ENCODE measurements at regions of chr3 and their contacts with region 1.

Region 1: DNA sequence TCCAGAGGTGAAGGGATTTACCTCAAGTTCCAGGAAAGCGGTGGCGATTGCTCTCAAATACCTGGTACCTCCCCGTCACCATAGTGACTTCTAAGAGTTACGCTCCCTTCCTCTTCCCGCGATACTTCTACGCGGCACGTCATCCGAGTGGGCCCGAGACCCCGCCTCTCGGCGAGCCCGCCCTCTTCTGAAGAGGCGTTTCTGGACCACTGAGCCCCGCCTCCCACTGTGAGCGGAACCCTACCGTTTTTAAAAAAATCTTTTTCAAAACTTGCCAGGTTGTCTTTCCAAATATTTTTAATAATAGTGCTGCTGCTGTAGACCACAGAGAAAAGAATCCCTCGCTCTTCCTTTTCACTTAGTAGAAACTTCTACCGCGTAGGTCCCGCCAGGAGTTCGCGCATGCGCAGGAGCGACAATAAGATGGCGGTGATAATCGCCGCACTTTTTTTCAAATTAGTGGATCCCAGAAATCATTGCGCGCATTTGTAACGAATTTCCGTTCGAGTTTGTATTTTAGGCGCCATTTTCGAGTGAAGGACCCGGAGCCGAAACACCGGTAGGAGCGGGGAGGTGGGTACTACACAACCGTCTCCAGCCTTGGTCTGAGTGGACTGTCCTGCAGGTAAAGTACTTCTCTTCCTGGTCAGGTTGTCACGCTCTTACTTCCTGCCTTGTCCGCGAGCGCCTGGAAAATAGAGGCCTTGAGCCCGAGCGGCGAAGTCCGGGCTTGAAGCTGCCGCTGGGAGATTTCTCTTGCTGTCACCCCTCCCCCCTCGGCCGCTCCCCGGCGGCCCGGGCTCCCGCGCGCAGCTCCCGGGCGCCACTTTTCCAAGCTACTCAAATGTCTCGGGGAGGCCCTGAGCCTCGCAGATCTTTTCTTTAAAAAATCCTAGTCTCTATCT is at the starts of genes IFT80 and SMC4:
- DNase-seq: peak; percentile 91 to 94
- ATAC-seq: peak; percentile 98
- H3K4me3 ChIP-seq: peak within 1 kb of the TSS; percentile 51 to 88 (median 80)
- H3K27ac ChIP-seq: peak within 1 kb of the TSS; percentile 82 to 87 (median 86)
- H3K4me1 ChIP-seq: peaks cover 20 to 28% of the 10 kb centered on the region in 2 donors
- H3K27me3 ChIP-seq: no peaks in the 10 kb centered on the region
- CTCF ChIP-seq: no peak
- POLR2A ChIP-seq: peak; percentile 45 to 75
- total RNA-seq, gene IFT80: 3.9 to 7.9 (median 6.0) TPM
- total RNA-seq, gene SMC4: 7.2 to 24.3 (median 14.7) TPM

Region 2: GRCh38 chr3:158801696-158802408 is 1597.5 kb before region 1 on chr3 and contains the start of gene MFSD1:
- in situ Hi-C with region 1: no loop called
- intact Hi-C with region 1: loop called (anchors 5 kb)
- DNase-seq: peak; percentile 90 to 94
- ATAC-seq: peak; percentile 98
- H3K4me3 ChIP-seq: peak within 1 kb of the TSS; percentile 68 to 99 (median 92)
- H3K27ac ChIP-seq: peak within 1 kb of the TSS; percentile 80 to 95 (median 86)
- H3K4me1 ChIP-seq: peaks cover 16 to 30% of the 10 kb centered on the region in 2 donors
- H3K27me3 ChIP-seq: no peaks in the 10 kb centered on the region
- CTCF ChIP-seq: no peak
- POLR2A ChIP-seq: peak; percentile 76 to 80
- total RNA-seq, gene MFSD1: 18.6 to 33.5 (median 25.2) TPM

Region 3: DNA sequence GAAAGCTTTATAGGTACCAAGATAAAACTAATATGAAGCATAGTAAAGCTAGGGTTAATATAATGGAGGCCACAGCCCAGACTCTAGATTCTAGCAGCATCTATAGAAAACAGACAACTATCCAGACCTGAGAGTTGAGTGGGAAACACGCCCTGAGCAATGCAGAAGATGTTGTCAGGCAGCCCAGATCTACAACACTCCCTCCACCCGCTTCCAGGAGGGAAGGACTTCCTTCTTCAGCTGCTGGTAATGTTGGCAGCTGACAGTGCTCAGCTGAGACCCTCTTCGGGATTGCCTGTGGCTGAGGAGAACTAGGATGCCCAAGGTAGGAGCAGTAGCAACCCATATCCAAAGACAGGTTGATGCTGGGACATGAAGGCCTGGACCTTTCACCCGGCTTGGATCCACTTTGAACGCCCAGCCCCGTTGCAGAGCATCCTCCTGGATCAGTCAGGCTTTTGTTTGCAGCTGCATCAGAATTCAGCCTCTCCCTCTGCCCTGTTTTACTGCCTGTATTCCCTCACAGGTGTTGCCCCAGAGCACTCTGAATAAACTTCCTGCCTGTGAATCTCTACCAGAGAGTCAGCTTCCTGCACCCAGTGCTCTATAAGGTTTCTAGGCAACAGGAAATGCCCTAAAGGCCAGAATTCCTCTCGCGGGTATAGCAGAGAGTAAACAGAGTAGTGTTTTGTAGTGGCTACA is 585.4 kb before region 1 on chr3:
- in situ Hi-C with region 1: loop called in 1 of 4 experiments (anchors 10 kb)
- intact Hi-C with region 1: no loop called
- DNase-seq: no peak
- ATAC-seq: no peak
- H3K4me3 ChIP-seq: no peak overlapping the region
- H3K27ac ChIP-seq: no peak overlapping the region
- H3K4me1 ChIP-seq: peaks cover 4 to 8% of the 10 kb centered on the region in 2 donors
- H3K27me3 ChIP-seq: no peaks in the 10 kb centered on the region
- CTCF ChIP-seq: no peak
- POLR2A ChIP-seq: no peak

Region 4: GRCh38 chr3:159884661-159885402 is 514.5 kb before region 1 on chr3:
- in situ Hi-C with region 1: no loop called
- intact Hi-C with region 1: loop called (anchors 2 kb)
- DNase-seq: no peak
- ATAC-seq: no peak
- H3K4me3 ChIP-seq: no peak overlapping the region
- H3K27ac ChIP-seq: peak overlapping the region in 3 of 4 donors; percentile 39 to 92 (median 83)
- H3K4me1 ChIP-seq: peaks cover 60 to 68% of the 10 kb centered on the region in 2 donors
- H3K27me3 ChIP-seq: no peaks in the 10 kb centered on the region
- CTCF ChIP-seq: peak; percentile 24 to 57 (median 41)
- POLR2A ChIP-seq: no peak

Region 5: DNA sequence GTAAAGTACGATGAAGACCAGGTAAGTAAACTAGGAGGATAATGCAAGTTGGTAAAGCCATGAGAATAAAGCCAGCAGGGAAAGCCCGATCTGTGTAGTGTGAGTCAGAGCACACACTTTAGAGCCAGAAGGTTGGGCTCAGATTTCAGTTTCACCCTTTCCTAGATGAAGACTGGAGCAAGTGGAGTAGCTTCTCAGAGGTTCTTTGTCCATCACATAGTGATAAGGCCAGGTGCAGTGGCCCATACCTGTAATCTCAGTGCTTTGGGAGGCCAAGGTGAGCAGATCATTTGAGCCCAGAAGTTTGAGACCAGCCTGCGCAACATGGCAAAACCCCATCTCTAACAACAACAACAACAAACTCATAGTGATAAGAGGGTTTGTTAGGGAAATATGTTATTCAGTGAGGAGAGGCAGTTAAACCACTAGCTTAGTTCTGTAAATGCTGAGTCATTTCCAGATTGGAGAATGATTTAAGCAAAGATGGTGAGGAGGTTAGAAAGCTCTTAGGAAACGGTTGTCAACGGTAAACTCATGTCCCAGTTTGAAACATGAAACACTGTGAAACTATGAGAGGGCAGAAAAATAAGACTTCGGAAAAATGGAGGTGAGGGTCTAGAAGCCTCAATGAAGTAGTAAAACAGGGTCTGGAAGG is 371.7 kb before region 1 on chr3:
- in situ Hi-C with region 1: loop called in 1 of 4 experiments (anchors 25 kb)
- intact Hi-C with region 1: no loop called
- DNase-seq: no peak
- ATAC-seq: no peak
- H3K4me3 ChIP-seq: no peak overlapping the region
- H3K27ac ChIP-seq: no peak overlapping the region
- H3K4me1 ChIP-seq: no peaks in the 10 kb centered on the region
- H3K27me3 ChIP-seq: no peaks in the 10 kb centered on the region
- CTCF ChIP-seq: no peak
- POLR2A ChIP-seq: no peak

Region 6: GRCh38 chr3:160065282-160065681 is 334.1 kb before region 1 on chr3:
- in situ Hi-C with region 1: no loop called
- intact Hi-C with region 1: no loop called
- DNase-seq: no peak
- ATAC-seq: no peak
- H3K4me3 ChIP-seq: no peak overlapping the region
- H3K27ac ChIP-seq: no peak overlapping the region
- H3K4me1 ChIP-seq: no peaks in the 10 kb centered on the region
- H3K27me3 ChIP-seq: no peaks in the 10 kb centered on the region
- CTCF ChIP-seq: no peak
- POLR2A ChIP-seq: no peak

Region 7: DNA sequence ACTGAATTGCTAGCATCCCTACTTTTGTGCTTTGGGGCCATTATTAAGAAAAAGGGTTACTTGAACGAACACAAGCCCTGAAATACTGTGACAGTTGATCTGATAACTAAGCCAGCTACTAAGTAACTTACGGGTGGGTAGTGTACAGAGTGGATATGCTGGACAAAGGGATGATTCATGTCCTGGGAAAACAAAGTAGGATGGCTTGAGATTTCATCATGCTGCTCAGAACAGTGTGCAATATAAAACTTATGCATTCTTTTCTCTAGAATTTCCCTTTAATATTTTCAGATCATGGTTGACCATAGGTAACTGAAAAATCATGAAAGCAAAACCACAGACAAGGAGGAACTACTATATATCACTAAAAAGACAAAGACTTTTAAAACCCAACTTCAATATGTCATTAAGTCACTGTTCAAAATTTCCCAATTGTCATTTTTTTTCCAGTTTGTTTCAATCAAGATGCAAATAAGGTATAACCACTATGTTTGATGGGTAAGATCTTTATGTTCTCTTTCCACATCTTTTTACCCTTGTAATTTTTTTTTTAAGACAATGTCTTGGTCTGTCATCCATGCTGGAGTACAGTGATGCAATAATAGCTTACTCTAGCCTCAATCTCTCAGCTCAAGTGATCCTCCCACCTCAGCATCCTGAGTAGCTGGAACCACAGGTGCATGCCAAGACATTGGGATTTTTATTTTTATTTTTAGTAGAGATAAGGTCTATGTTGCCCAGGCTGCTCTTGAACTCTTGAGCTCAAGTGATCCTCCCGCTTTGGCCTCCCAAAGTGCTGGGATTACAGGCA is 68.0 kb before region 1 on chr3:
- in situ Hi-C with region 1: no loop called
- intact Hi-C with region 1: no loop called
- DNase-seq: no peak
- ATAC-seq: no peak
- H3K4me3 ChIP-seq: no peak overlapping the region
- H3K27ac ChIP-seq: no peak overlapping the region
- H3K4me1 ChIP-seq: no peaks in the 10 kb centered on the region
- H3K27me3 ChIP-seq: no peaks in the 10 kb centered on the region
- CTCF ChIP-seq: no peak
- POLR2A ChIP-seq: no peak

Region 8: DNA sequence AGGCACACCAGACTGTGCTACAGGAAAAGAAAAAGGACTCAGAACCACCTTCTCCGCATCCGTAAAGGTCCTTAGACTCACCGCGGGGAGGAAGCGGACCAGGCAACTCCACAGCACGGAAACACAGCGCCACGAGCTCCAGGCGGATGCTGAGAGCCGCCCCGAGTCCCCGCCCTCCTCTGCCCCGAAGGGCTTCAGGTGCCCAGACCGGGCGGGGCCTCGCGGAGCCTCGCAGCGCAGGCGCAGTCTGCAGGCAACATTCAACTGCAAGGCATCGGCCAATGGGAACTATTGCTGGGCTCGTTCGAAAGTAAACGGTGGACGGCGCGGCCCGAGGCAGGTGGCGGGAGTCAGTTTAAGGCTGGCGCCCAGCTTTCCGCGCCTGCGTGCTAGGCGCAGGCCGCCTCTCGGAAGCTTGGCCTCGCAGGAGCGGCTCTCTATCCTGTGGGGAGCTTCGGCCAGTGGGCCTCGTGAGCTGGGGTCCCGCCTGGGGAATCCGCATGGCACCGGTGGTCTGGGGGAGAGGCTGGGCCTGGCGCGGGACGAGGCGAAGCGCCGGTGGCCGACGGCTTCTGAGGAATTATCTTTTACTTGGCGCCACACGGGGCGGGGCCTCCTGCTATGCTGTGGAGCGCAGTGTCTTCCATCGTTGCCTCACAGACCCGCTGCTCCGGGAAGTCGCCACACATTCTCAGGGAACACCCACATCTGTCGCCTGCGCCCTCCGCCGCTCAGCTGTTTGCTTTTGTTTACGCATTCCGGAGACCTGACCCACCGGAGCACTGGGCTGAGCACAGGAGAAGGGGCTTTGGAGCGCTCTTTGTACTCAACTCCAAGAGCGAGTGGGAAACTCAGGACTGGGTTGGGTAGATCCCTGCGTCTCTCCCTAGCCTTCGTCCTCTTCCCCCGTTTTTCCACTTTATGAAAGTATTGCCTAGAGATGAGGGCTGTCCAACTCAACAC is 50.5 kb after region 1 on chr3 and contains the start of gene TRIM59:
- in situ Hi-C with region 1: no loop called
- intact Hi-C with region 1: no loop called
- DNase-seq: peak; percentile 18 to 44
- ATAC-seq: peak; percentile 30 to 33
- H3K4me3 ChIP-seq: peak within 1 kb of the TSS; percentile 36 to 51 (median 42)
- H3K27ac ChIP-seq: no peak within 1 kb of the TSS
- H3K4me1 ChIP-seq: peaks cover 0 to 7% of the 10 kb centered on the region in 2 donors
- H3K27me3 ChIP-seq: peaks cover 27 to 42% (median 34%) of the 10 kb centered on the region in 3 donors
- CTCF ChIP-seq: no peak
- POLR2A ChIP-seq: no peak
- total RNA-seq, gene TRIM59: 0.13 to 0.55 (median 0.46) TPM

Region 9: DNA sequence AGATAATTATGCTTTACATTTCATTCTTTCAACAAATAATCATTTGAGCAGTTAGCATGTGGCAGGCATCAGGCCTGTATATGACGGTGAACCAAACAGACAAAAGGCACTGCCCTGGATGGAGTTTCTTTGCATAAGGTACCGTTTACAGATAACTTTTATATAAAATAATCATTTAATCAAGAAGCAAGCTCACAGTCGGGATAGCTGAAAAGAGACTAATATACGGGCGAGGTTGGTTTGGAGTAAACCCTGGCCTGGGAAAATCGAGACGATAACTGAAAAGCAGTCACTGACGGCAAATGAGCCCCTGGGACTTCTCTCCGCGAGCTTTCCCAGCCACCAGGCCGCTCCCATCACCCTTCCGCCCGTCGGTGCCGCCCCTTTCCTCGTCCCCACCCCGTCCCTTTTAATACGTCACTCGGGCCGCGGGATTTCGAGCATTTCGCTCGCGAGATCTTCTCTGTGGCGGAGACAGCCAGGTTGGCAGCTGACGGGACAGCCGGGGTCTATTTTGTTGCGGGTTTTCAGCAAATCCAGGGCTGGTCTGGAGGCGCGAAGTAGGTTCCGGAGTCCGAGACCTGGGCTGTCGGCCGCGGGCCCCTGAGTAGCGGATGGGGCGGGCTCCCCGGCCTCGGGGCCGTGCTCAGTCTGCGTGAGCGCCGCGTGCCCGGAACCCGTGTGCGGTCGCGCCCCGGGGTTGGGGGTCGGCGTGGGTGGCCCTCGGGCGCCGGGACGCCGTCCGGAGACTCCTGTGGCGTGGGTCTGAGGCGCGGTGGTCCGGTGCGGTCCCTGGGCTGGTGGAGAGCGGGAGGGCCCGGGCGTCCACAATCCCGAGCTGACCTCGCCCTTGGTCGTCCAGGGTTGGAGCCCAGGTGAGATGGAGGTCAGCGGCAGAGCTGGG is 821.7 kb after region 1 on chr3 and contains the start of gene NMD3:
- in situ Hi-C with region 1: no loop called
- intact Hi-C with region 1: loop called (anchors 2 kb)
- DNase-seq: peak; percentile 90 to 91
- ATAC-seq: peak; percentile 98 to 99
- H3K4me3 ChIP-seq: peak within 1 kb of the TSS; percentile 84 to 95 (median 90)
- H3K27ac ChIP-seq: peak within 1 kb of the TSS; percentile 92 to 95 (median 94)
- H3K4me1 ChIP-seq: peaks cover 19 to 29% of the 10 kb centered on the region in 2 donors
- H3K27me3 ChIP-seq: no peaks in the 10 kb centered on the region
- CTCF ChIP-seq: no peak
- POLR2A ChIP-seq: peak; percentile 83 to 87
- total RNA-seq, gene NMD3: 27.3 to 42.8 (median 37.4) TPM